Activated CD8-positive, alpha-beta T cell treated with anti-CD3 and anti-CD28 coated beads for 36 hours (primary cell): ENCODE measurements at regions of chr11 and their contacts with region 1.

Region 1: DNA sequence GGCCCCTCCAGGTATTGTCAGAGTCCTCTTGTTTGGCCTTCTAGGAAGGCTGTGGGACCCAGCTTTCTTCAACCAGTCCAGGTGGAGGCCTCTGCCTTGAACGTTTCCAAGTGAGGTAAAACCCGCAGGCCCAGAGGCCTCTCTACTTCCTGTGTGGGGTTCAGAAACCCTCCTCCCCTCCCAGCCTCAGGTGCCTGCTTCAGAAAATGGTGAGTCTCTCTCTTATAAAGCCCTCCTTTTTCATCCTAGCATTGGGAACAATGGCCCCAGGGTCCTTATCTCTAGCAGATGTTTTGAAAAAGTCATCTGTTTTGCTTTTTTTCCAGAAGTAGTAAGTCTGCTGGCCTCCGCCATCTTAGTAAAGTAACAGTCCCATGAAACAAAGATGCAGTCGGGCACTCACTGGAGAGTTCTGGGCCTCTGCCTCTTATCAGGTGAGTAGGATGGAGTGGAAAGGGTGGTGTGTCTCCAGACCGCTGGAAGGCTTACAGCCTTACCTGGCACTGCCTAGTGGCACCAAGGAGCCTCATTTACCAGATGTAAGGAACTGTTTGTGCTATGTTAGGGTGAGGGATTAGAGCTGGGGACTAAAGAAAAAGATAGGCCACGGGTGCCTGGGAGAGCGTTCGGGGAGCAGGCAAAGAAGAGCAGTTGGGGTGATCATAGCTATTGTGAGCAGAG is at the start of gene CD3E:
- DNase-seq: peak; percentile 88
- ATAC-seq: peak; percentile 77
- H3K4me3 Mint-ChIP-seq: peak within 1 kb of the TSS; percentile 96
- H3K27ac Mint-ChIP-seq: peak within 1 kb of the TSS; percentile 99
- H3K4me1 Mint-ChIP-seq: peaks cover 54% of the 10 kb centered on the region
- H3K27me3 Mint-ChIP-seq: no peaks in the 10 kb centered on the region
- CTCF ChIP-seq: no peak
- total RNA-seq, gene CD3E: 372 to 387 TPM

Region 2: DNA sequence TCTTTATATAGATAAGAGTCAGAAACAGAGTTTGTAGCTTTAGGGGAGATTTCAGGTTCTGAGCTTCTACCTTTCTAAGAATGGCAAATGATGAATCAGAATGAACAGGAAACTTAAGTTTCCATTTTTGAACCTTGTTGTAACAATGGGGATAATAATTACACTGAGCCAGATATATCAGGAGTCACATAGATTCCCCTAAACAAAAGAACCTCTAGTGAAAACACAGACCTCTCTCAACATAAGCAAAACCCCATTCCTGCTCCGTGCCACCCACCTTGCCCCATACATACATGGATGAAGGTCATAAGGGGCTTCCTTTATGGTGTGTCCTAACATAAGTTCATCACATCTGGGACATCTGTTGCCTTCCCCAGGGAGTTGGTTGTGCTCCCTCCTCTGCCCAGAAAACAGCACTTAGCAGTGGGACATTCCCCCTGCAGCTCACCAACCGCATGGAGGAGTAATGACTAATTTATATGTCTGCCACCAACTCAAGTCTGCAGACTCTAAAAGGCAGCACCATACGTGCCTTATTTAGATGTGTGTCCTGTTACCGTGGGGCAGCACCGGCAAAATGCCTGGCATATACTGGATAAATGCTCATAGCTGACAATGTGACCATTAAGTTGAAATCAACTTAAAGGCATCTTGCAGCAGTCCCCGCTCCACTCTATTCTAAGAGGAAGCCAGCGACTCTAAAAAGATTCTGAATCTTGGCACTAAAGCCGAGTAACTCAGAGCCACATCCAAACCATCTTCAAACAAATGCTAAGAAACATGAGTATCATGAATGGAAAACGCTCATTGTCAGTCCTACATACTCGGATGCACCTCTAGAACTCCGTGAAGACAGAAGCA is 87.9 kb before region 1 on chr11:
- CTCF ChIA-PET with region 1: no interaction called
- POLR2A ChIA-PET with region 1: interaction called, 73 read pairs
- intact Hi-C with region 1: loop called (anchors 5 kb)
- DNase-seq: peak; percentile 79
- ATAC-seq: peak; percentile 70
- H3K4me3 Mint-ChIP-seq: peak overlapping the region; percentile 96
- H3K27ac Mint-ChIP-seq: peak overlapping the region; percentile 100
- H3K4me1 Mint-ChIP-seq: peaks cover 84% of the 10 kb centered on the region
- H3K27me3 Mint-ChIP-seq: no peaks in the 10 kb centered on the region
- CTCF ChIP-seq: no peak

Region 3: GRCh38 chr11:118240999-118241768 is 63.5 kb before region 1 on chr11:
- CTCF ChIA-PET with region 1: interaction called, 3 read pairs
- POLR2A ChIA-PET with region 1: interaction called, 18 read pairs
- intact Hi-C with region 1: no loop called
- DNase-seq: peak; percentile 85
- ATAC-seq: peak; percentile 82
- H3K4me3 Mint-ChIP-seq: peak overlapping the region; percentile 86
- H3K27ac Mint-ChIP-seq: peak overlapping the region; percentile 97
- H3K4me1 Mint-ChIP-seq: peaks cover 78% of the 10 kb centered on the region
- H3K27me3 Mint-ChIP-seq: no peaks in the 10 kb centered on the region
- CTCF ChIP-seq: no peak

Region 4: DNA sequence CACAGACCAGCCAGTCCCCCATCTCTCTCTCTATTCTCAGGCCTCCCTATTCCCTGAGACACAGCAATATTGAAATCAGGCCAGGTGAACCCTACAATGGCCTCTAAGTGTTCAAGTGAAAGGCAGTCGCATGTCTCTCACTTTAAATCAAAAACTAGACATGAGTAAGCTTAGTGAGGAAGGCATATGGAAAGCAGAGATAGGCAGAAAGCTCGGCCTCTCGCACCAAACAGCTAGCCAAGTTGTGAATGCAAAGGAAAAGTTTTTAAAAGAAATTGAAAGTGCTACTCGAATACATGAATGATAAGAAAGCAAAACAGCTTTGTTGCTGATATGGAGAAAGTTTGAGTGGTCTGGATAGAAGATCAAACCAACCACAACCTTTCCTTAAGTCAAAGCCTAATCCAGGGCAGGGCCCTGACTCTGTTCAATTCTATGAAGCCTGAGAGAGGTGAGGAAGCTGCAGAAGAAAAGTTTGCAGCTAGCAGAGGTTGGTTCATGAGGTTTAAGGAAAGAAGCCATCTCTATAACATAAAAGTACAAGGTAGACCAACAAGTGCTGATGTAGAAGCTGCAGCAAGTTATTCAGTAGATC is 20.9 kb before region 1 on chr11:
- CTCF ChIA-PET with region 1: interaction called, 10 read pairs
- POLR2A ChIA-PET with region 1: interaction called, 6 read pairs
- intact Hi-C with region 1: no loop called
- DNase-seq: peak; percentile 48
- ATAC-seq: peak; percentile 66
- H3K4me3 Mint-ChIP-seq: peak overlapping the region; percentile 31
- H3K27ac Mint-ChIP-seq: peak overlapping the region; percentile 89
- H3K4me1 Mint-ChIP-seq: peaks cover 49% of the 10 kb centered on the region
- H3K27me3 Mint-ChIP-seq: no peaks in the 10 kb centered on the region
- CTCF ChIP-seq: no peak

Region 5: DNA sequence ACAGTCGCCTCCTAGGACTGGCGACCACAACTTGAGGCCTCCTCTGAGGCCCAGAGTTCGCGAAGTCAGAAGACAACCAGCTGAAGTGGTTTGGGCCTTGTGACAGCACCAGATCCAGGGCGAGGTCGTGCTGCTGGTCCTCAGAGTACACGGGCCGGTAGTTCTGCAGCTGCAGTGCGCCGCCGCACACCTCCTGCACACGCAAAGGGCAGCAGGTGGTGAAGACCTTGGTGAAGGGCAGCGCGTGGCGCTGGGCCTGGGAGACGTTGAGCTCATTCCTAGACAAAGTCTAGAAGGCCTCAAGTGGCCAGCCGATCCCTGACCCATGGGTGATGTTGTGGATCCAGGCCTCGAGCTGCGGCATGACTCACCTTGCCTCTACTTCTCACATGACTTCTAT is 18.0 kb after region 1 on chr11:
- CTCF ChIA-PET with region 1: no interaction called
- POLR2A ChIA-PET with region 1: interaction called, 10 read pairs
- intact Hi-C with region 1: no loop called
- DNase-seq: no peak
- ATAC-seq: no peak
- H3K4me3 Mint-ChIP-seq: no peak overlapping the region
- H3K27ac Mint-ChIP-seq: no peak overlapping the region
- H3K4me1 Mint-ChIP-seq: peaks cover 51% of the 10 kb centered on the region
- H3K27me3 Mint-ChIP-seq: no peaks in the 10 kb centered on the region
- CTCF ChIP-seq: no peak

Region 6: GRCh38 chr11:118353084-118353710 is 48.5 kb after region 1 on chr11:
- CTCF ChIA-PET with region 1: interaction called, 46 read pairs
- POLR2A ChIA-PET with region 1: interaction called, 4 read pairs
- intact Hi-C with region 1: no loop called
- DNase-seq: no peak
- ATAC-seq: peak; percentile 21
- H3K4me3 Mint-ChIP-seq: no peak overlapping the region
- H3K27ac Mint-ChIP-seq: peak overlapping the region; percentile 86
- H3K4me1 Mint-ChIP-seq: peaks cover 33% of the 10 kb centered on the region
- H3K27me3 Mint-ChIP-seq: no peaks in the 10 kb centered on the region
- CTCF ChIP-seq: peak; percentile 83